Heart right ventricle (tissue), 16 donors: ENCODE measurements at regions of chr10 and their contacts with region 1.

Region 1: DNA sequence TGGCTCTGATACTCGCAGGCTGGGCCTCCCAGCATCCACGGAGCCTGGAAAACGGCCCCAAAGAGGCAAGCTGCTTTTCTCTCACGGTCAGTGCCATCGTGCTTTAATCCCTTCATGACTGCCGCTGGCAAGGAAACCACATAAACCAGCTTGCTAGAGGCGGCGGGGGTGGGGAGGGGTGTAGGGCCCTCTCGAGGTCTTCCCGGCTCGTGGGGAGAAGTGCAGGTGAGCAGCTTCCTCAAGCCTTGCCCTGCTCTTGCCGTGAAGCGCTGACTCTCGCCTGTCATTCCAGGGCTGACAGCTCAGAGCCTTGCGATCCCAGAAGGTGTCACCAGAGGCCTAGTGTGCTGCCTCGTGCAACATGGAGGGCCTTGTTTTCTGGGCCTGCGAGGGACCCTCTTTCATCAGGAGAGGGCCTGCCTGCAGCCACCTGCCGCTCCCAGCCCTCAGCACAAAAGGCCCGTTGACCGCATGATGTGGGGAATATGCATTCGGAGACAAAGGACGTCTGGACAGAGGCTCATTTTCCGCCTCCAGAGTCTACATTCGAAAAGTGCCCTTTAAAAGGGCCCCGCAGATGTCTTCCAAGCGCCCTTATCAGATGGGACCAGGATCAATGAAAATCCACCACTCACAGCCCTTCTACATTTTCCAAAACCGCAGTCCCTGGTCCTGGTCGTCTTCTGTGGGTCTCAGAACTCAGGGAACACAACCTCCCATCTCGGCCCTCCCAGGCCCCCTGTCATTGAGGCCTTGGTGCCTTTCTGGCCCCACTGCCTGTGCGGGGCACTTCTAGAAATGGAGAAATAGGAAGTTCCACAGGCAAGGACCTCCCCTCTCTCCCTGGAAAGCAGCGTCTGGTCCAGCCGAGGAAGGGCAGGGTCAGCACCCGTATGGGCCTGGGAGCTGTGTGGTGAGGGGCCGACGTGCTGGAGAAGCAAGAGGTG is 58.7 kb downstream of the ZRANB1 start:
- DNase-seq: peak in 1 of 2 donors; percentile 18
- ATAC-seq: peak in 6 of 8 donors; percentile 23 to 60 (median 36)
- H3K4me3 ChIP-seq: no peak overlapping the region
- H3K27ac ChIP-seq: peak overlapping the region in 9 of 10 donors; percentile 12 to 81 (median 71)
- H3K4me1 ChIP-seq: peaks cover 30 to 56% (median 42%) of the 10 kb centered on the region in 9 donors
- H3K27me3 ChIP-seq: no peaks in the 10 kb centered on the region
- CTCF ChIP-seq: peak in 6 of 9 donors; percentile 5 to 45 (median 28)

Region 2: GRCh38 chr10:124928087-124928486 is 72.6 kb before region 1 on chr10:
- intact Hi-C with region 1: no loop called
- DNase-seq: no peak
- ATAC-seq: no peak
- H3K4me3 ChIP-seq: no peak overlapping the region
- H3K27ac ChIP-seq: peak overlapping the region in 1 of 10 donors; percentile 0
- H3K4me1 ChIP-seq: peaks cover 5 to 44% (median 29%) of the 10 kb centered on the region in 9 donors
- H3K27me3 ChIP-seq: no peaks in the 10 kb centered on the region
- CTCF ChIP-seq: no peak

Region 3: GRCh38 chr10:125038637-125039036 is 38.0 kb after region 1 on chr10:
- intact Hi-C with region 1: loop called in 4 of 10 experiments (anchors 5 to 10 kb)
- DNase-seq: peak; percentile 65 to 69
- ATAC-seq: peak; percentile 80 to 95 (median 89)
- H3K4me3 ChIP-seq: no peak overlapping the region
- H3K27ac ChIP-seq: peak overlapping the region in 4 of 10 donors; percentile 21 to 61 (median 44)
- H3K4me1 ChIP-seq: peaks cover 25 to 84% (median 56%) of the 10 kb centered on the region in 9 donors
- H3K27me3 ChIP-seq: no peaks in the 10 kb centered on the region
- CTCF ChIP-seq: peak in 4 of 9 donors; percentile 20 to 47 (median 42)